Activated T-helper 1 cell treated with anti-CD3 and anti-CD28 coated beads, Interleukin-12 subunit alpha, Interleukin-12 subunit beta, Interleukin-2, Interleukin-4 antibody, amounts not matched to agents 30 ng/mL and 10 ng/mL and 1 ng/mL, durations not matched to agents 14 hours and 24 hours and 36 hours (primary cell): ENCODE measurements at regions of chr3 and their contacts with region 1.

Region 1: DNA sequence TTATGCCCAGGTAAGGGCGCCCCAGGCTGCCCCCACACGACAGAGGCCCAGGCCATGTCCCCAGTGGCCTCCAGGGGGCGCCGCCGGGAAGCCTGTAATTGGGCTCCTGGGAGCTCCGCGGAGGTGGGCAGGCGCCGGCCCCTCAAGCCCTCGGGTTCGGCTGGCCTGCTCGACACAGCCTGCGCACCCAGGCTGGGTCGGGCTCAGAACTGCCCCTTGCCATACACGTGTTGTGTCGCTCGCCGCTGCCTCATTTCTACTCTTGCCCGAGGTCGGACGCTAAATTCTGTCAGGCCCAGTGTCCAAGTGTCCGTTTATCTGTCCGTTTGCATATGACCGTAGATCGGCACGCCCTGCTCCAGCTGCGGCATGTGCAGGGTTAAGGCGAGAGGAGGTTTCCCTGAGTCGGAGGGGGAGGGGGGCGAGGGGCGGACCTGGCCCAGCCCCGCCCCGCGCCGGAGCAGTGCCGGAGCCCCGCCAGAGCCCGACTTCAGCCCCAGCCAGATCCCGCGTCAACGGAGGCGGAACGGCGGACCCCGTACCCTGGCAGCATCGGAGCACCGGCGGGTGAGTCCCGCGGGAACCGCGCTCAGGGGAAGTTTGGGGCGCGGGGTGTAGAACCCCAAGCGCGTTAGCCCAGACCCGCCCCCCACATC is at the start of gene KLHDC8B:
- DNase-seq: peak; percentile 68
- H3K4me3 Mint-ChIP-seq: peak within 1 kb of the TSS; percentile 88
- H3K27ac Mint-ChIP-seq: peak within 1 kb of the TSS; percentile 63
- H3K4me1 Mint-ChIP-seq: peaks cover 6% of the 10 kb centered on the region
- H3K27me3 Mint-ChIP-seq: no peaks in the 10 kb centered on the region
- total RNA-seq, gene KLHDC8B: 2.6 and 2.9 TPM in 2 replicates

Region 2: DNA sequence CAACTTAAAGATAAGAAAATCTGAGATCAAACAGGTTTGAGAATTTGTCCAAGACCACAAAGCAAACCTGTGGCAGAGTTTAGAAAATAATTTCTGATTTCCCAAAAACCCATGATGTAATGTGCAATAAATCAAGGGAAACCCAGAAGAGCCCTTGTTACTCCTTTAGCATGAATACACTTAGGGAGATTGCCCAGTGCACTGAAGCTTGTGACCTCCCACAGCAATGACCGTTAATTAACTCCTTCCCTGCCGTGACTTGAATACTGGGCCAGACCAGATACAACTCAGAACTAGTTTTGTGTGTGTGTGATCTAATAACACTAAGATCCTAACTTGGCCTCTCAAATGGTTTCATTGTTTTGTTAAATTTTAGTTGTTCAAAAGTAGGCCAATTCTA is 326.1 kb before region 1 on chr3:
- intact Hi-C with region 1: no loop called
- DNase-seq: no peak
- H3K4me3 Mint-ChIP-seq: peak overlapping the region; percentile 50
- H3K27ac Mint-ChIP-seq: no peak overlapping the region
- H3K4me1 Mint-ChIP-seq: peaks cover 22% of the 10 kb centered on the region
- H3K27me3 Mint-ChIP-seq: no peaks in the 10 kb centered on the region

Region 3: GRCh38 chr3:49276475-49277382 is 105.5 kb after region 1 on chr3 and contains the start of gene C3orf62:
- intact Hi-C with region 1: loop called (anchors 2 kb)
- DNase-seq: peak; percentile 70
- H3K4me3 Mint-ChIP-seq: peak within 1 kb of the TSS; percentile 82
- H3K27ac Mint-ChIP-seq: peak within 1 kb of the TSS; percentile 82
- H3K4me1 Mint-ChIP-seq: peaks cover 21% of the 10 kb centered on the region
- H3K27me3 Mint-ChIP-seq: no peaks in the 10 kb centered on the region
- total RNA-seq, gene C3orf62: 9.1 and 10.1 TPM in 2 replicates